PC-9 (cell line): ENCODE measurements at regions of chr11 and their contacts with region 1.

Region 1: DNA sequence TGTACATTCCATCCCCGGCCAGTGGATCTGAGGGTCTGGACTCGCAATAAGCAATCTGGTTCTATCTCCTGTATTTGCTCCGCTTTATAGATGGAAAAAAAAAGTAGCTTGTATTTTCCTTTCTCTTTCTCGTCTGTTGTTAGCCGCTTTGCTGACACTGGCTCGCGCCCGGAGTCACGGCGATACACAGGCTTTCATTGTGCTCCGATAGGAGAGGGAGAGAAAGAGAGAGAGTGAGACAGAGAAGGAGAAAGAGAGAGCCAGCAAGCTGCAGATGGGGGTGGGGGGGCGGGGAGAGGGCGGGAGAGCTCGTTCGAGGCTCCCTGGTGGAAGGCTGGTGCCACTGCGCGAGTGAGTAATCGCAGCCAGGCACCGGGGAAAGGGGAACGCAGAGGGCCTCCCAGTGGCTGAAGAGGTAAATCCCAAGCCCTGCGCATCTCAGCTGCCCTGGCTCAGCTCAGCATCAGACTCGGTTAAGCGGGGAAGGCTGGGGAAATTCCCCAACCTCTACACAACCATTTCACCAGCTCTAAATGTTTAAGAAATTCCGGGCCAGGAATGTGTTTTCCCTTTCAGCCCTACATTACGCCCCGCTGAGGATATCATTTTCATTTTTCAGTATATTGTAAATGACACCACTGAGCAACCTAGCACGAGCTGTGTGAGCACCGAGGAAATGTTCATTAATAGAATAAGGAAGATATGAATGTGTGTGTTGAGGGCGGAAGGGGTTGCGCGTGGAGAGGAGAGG is at the start of gene MAML2:
- DNase-seq: peak; percentile 89
- H3K4me3 ChIP-seq: peak within 1 kb of the TSS; percentile 78
- H3K27ac ChIP-seq: peak within 1 kb of the TSS; percentile 70
- H3K4me1 ChIP-seq: peaks cover 35% of the 10 kb centered on the region
- H3K27me3 ChIP-seq: no peaks in the 10 kb centered on the region
- CTCF ChIP-seq: peak; percentile 83
- total RNA-seq, gene MAML2: 17.7 and 28.3 TPM in 2 replicates

Region 2: DNA sequence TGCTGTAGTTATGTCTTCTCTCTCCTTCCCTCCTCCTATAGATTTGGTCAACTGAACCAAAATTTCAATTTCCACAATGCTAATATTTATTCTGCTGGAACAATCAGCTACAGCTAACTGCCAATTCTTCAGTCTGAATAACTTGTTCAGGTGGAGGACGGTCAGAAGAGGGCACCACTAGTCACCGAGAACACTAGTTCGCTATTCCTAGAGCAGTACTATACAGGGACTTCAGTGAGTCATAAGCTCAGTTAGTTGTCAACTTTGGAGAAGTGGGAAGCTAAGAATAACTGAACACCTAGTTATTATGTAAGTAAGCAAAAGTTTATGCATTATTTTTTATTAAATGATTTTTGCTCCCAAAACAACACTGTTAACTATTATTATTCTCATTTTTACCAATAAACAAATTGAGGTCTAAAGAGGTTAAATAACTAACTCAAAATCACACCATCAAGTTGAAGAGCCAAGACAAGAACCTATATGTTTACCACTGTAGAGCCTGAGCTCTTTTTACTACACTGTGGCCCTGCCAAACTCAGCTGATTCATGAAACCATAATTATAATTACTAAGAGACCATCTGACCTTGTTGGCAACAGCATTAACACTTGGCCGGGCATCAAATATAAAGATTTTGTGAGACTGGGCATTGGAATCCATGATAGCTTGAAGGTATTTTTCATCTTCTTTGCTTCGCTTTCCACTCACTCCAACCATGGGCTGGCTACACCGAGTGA is 493.9 kb before region 1 on chr11:
- CTCF ChIA-PET with region 1: interaction called, 17 read pairs
- POLR2A ChIA-PET with region 1: no interaction called
- intact Hi-C with region 1: no loop called
- DNase-seq: peak; percentile 43 to 56
- H3K4me3 ChIP-seq: no peak overlapping the region
- H3K27ac ChIP-seq: peak overlapping the region; percentile 16
- H3K4me1 ChIP-seq: no peaks in the 10 kb centered on the region; the same call in 1 of the 2 replicates
- H3K27me3 ChIP-seq: no peaks in the 10 kb centered on the region
- CTCF ChIP-seq: peak; percentile 64; the same call in 1 of the 2 replicates

Region 3: DNA sequence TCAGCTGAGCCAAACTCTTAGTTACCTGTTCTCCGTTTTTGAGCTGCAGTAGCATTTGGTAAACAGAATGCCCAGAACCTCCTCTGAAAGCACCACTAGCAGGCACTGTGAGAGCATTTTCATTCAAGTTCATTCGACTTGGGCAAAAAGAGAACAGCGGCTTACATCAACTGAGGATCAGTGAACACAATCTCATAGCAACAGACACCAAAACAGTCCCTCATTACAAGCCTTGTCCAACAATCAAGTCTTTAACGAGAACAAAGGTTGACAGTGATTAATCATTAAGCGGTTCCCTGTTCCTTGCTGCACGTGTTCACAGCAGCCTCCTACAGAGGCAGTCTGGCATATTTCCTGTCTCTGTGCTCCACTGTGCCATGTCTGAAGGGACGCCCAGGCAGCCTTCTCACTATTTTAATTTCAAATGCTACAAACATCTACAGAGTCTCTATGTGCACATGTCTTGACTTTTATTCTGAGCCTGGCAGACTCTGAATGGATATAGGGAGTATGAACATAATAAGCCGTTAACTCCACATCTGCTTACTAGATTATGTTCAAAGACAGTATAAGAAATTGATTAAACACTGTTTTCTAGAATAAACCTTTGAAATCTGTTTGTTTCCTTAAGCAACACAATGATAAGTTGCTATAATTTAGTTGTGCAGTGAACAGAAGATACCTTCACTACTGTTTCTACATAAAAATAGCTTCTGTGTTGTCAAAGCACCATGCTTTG is 330.9 kb before region 1 on chr11:
- CTCF ChIA-PET with region 1: no interaction called
- POLR2A ChIA-PET with region 1: interaction called, 5 read pairs
- intact Hi-C with region 1: loop called (anchors 1 kb)
- DNase-seq: peak; percentile 53 to 65
- H3K4me3 ChIP-seq: no peak overlapping the region
- H3K27ac ChIP-seq: no peak overlapping the region
- H3K4me1 ChIP-seq: peaks cover 24% of the 10 kb centered on the region
- H3K27me3 ChIP-seq: no peaks in the 10 kb centered on the region
- CTCF ChIP-seq: peak; percentile 21; the same call in 1 of the 2 replicates

Region 4: DNA sequence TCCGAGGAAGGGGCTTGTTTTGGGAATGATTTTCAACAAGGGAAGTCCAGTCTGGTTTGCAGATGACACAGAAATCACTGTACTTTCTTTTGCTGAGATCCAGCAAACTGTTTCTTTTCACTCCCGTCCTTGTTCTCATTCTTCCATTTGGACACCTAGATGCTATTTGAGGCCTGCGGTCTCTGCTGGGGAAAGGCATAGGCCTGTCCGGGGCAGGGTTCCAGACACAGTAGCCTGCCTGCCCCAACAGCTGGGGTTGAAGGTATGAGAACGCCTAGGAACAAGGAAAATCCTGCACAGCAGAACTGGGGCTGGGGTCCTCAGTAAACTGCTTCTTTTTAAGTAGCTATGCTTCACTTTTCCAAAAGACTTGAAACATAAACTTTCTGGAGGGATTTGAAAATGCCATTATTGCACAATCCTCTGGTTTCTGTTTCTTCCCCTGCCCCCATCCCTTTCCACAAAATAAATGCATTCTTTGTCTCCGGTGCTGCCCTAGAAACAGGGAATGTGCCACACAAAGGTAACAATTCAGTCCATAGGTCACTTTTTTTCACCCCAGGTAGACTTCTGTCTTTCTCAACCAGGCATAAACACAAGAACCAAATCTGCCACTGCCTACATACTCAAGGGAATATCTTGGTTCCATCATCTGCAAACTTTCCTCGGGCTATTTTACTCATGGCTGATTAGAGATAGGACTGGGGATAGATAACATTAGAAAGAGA is 244.5 kb before region 1 on chr11:
- CTCF ChIA-PET with region 1: no interaction called
- POLR2A ChIA-PET with region 1: interaction called, 7 read pairs
- intact Hi-C with region 1: loop called (anchors 1 kb)
- DNase-seq: peak; percentile 64 to 99
- H3K4me3 ChIP-seq: peak overlapping the region; percentile 38; the same call in 1 of the 2 replicates
- H3K27ac ChIP-seq: peak overlapping the region; percentile 98
- H3K4me1 ChIP-seq: peaks cover 93% of the 10 kb centered on the region
- H3K27me3 ChIP-seq: no peaks in the 10 kb centered on the region
- CTCF ChIP-seq: no peak

Region 5: GRCh38 chr11:96263361-96263763 is 79.8 kb before region 1 on chr11:
- CTCF ChIA-PET with region 1: interaction called, 3 read pairs
- POLR2A ChIA-PET with region 1: interaction called, 4 read pairs
- intact Hi-C with region 1: loop called (anchors 1 kb)
- DNase-seq: peak in 1 of 2 experiments; percentile 97
- H3K4me3 ChIP-seq: peak overlapping the region; percentile 17; the same call in 1 of the 2 replicates
- H3K27ac ChIP-seq: peak overlapping the region; percentile 77
- H3K4me1 ChIP-seq: peaks cover 82% of the 10 kb centered on the region
- H3K27me3 ChIP-seq: no peaks in the 10 kb centered on the region
- CTCF ChIP-seq: no peak

Region 6: GRCh38 chr11:96306933-96307775 is 36.0 kb before region 1 on chr11:
- CTCF ChIA-PET with region 1: interaction called, 13 read pairs
- POLR2A ChIA-PET with region 1: interaction called, 23 read pairs
- intact Hi-C with region 1: loop called (anchors 1 kb)
- DNase-seq: peak; percentile 84 to 100
- H3K4me3 ChIP-seq: peak overlapping the region; percentile 43
- H3K27ac ChIP-seq: peak overlapping the region; percentile 96
- H3K4me1 ChIP-seq: peaks cover 99% of the 10 kb centered on the region
- H3K27me3 ChIP-seq: no peaks in the 10 kb centered on the region
- CTCF ChIP-seq: no peak

Region 7: DNA sequence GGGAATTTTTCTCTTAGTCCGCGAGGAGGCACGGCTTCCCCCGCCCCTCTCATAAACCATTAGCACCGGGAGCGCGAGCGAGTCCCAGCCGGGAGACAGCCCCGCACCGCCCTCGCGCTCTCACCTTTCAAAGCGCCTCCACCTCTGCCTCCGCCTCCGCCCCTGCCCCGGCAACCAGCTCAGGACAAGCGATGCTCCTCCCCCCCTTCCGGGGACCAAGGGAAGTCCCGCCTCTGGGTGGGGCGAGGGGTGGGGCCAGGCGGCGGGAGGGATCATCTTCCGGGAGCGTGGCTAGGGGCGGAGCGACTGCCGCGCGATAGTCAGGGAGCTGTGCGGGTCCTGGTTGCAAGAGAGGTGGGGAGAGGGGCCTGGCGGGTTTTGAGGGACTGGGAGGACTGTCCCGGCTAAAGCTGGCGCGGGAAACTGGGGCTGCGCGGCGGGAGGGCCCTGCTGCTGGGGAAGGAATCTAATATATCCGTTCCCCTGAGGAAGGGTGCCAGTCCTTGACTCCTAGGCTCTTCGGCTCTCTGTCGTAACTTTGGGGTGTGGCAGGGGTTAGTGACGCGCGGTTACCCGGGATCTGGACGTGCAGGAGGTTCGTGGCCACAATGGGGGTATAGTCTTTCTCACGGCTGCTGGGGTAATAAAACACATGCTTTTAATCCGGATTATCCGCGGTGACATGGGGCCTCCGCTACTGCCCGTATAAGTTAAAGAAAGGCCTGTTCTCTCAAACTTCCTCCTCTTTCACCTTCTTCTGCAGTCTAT is 46.8 kb after region 1 on chr11 and contains the starts of genes CCDC82 and JRKL:
- CTCF ChIA-PET with region 1: interaction called, 6 read pairs
- POLR2A ChIA-PET with region 1: interaction called, 3 read pairs
- intact Hi-C with region 1: loop called (anchors 2 kb)
- DNase-seq: peak; percentile 92 to 98
- H3K4me3 ChIP-seq: peak within 1 kb of the TSS; percentile 75
- H3K27ac ChIP-seq: peak within 1 kb of the TSS; percentile 58
- H3K4me1 ChIP-seq: peaks cover 27% of the 10 kb centered on the region
- H3K27me3 ChIP-seq: no peaks in the 10 kb centered on the region
- CTCF ChIP-seq: no peak
- total RNA-seq, gene CCDC82: 18.6 and 19.9 TPM in 2 replicates
- total RNA-seq, gene JRKL: 12.4 and 13.5 TPM in 2 replicates